Dorsolateral prefrontal cortex (tissue), 120 donors: ENCODE measurements at regions of chr7 and their contacts with region 1.

Region 1: DNA sequence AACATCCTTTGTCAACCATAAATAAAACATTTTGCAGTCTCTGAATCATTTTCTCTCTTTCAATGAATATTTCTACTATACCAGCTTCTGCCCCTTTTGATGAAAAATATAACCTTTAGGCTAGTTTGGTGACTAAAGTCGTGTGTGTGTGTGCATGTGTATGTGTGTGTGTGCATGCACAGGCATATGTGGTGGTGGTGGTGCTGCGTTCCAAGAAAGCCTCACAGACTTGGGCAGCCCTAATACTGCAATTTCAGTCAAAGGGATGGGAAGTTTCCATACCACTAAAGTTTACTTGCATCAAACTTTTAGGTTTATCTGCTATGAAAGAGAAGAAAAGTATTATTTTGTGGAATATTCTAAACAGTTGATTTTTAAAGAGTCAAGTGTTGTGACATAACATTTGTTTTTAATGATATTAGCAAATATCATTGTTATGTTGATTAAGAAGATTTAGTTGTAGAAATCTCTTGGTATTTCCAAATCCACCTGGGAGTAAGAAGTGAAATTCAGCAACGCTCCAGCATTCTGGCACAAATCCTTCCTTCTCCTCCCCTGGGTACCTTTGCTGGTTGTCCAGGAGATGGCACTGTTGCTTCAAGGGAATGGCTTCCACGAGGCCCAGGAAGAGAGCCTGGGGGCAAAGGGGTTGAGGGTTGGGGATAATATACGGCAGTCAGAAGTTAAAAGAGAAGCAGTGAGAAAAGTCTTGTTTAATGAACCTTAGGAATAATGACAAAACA is 41.5 kb downstream of the ASB4 start:
- DNase-seq: peak in 6 of 10 donors; percentile 23 to 73 (median 54)
- H3K4me3 ChIP-seq: peak overlapping the region in 11 of 59 donors; percentile 1 to 31 (median 12)
- H3K27ac ChIP-seq: peak overlapping the region in 58 of 59 donors; percentile 46 to 99 (median 93)
- H3K27me3 ChIP-seq: no peaks in the 10 kb centered on the region
- CTCF ChIP-seq: peak; percentile 52 to 98 (median 92)

Region 2: GRCh38 chr7:95246831-95247370 is 280.3 kb before region 1 on chr7:
- intact Hi-C with region 1: no loop called
- DNase-seq: peak in 8 of 10 donors; percentile 35 to 78 (median 46)
- H3K4me3 ChIP-seq: peak overlapping the region in 49 of 59 donors; percentile 7 to 59 (median 35)
- H3K27ac ChIP-seq: peak overlapping the region in 9 of 59 donors; percentile 8 to 63 (median 29)
- H3K27me3 ChIP-seq: no peaks in the 10 kb centered on the region
- CTCF ChIP-seq: peak; percentile 65 to 91 (median 83)

Region 3: DNA sequence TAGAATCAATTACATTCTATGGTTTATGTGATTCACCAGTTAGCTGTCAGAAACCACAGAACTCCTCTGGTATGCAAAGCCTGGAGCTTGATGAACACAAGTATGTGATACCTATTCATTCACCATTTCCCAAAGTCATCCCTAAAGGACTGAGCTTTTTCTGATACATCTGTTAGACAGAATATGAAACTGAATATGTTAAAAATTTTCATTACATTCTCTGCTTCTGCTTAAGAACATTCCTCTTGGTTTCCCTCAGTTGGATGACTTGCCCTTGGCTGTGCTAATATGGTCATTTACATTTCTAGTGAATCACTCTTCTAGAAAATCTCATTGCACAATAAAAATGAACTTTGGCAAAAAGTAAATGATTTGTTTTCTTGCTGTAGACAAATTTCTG is 192.1 kb before region 1 on chr7:
- intact Hi-C with region 1: no loop called
- DNase-seq: no peak
- H3K4me3 ChIP-seq: no peak overlapping the region
- H3K27ac ChIP-seq: no peak overlapping the region
- H3K27me3 ChIP-seq: no peaks in the 10 kb centered on the region
- CTCF ChIP-seq: no peak

Region 4: DNA sequence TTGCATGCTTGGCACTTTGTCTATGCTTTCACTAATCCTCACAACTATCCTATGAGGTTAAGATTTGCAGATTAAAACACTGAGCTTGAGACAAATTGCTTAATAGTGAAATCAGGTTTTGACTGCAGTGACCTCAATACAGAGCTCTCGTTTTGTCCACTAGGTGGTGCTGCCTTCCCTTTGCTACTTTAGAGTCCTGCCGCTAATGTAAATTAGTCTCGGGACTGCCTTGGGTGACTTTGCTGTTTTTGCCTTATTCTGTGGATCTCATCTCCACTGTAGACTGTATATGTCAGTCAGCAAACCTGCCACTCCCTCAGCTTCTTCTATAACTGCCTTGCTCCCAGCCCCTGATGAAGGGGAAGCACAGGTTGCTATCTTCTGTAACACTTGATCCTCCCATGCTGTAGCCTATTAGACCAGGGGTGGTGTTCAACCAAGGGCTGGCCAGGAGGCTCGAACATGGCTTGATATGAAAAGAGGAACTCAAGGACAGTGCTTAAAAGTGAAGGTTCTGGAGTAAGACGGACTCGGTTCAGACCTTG is 15.4 kb before region 1 on chr7:
- intact Hi-C with region 1: loop called in 1 of 2 experiments (anchors 2 kb)
- DNase-seq: peak; percentile 30 to 91 (median 64)
- H3K4me3 ChIP-seq: peak overlapping the region in 6 of 59 donors; percentile 1 to 13 (median 10)
- H3K27ac ChIP-seq: peak overlapping the region in 57 of 59 donors; percentile 25 to 94 (median 81)
- H3K27me3 ChIP-seq: no peaks in the 10 kb centered on the region
- CTCF ChIP-seq: peak; percentile 74 to 97 (median 92)